Gastrocnemius medialis (tissue), 4 donors: ENCODE measurements at regions of chrX and their contacts with region 1.

Region 1: DNA sequence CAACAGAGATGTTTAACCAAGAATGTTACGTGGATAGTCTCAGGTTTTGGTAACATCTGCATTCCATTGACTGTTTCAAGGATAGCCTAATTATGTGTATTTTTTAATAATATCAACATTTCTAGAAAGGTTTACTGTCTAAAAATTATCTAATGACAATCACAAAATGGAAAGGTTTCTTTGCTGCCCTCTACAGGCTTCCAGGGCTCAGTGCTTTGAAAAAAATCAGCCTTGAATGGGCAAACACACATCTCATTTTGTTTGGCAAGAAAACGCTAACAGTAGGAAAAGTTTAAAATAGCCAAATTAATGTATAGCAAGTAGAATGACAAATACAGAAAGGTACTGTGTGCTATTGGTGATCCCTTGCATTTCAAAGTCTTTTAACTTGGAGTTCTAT is 223.4 kb upstream of the PRPS2 start:
- DNase-seq: no peak
- ATAC-seq: no peak
- H3K4me3 ChIP-seq: no peak overlapping the region
- H3K27ac ChIP-seq: no peak overlapping the region
- H3K4me1 ChIP-seq: no peaks in the 10 kb centered on the region
- H3K27me3 ChIP-seq: no peaks in the 10 kb centered on the region
- CTCF ChIP-seq: peak in 2 of 5 experiments; percentile 27 to 50
- POLR2A ChIP-seq: no peak

Region 2: GRCh38 chrX:11778230-11778629 is 789.6 kb before region 1 on chrX:
- in situ Hi-C with region 1: no loop called
- intact Hi-C with region 1: no loop called
- DNase-seq: no peak
- ATAC-seq: no peak
- H3K4me3 ChIP-seq: no peak overlapping the region
- H3K27ac ChIP-seq: no peak overlapping the region
- H3K4me1 ChIP-seq: no peaks in the 10 kb centered on the region
- H3K27me3 ChIP-seq: no peaks in the 10 kb centered on the region
- CTCF ChIP-seq: no peak
- POLR2A ChIP-seq: no peak

Region 3: DNA sequence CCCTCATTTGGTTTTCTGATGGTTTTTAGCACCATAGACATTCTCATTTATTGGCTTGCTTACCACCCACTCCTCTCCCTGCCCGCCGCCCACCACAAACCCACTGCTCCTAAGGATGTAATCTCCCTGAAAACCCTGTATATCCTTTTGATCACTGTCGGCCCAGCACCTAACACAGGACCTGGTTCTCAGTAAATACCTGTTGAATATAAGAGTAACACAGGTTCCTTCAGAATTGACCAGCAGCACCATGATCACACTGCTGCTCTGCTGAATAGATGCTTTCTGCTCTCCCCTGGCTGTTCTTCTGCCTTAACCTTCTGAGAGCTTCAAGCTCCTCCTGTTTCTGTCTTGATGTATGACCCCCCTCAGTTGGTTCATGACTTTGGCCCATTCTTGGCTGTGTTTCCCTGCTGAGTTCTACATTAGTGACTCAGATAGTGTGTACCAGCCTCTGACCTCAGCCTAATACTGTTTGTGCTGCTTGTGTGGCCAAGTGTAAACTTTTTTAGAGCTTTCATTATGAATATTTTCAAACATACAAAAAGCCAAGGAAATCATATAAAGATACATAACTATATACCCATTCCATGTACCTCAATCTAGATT is 164.3 kb before region 1 on chrX:
- in situ Hi-C with region 1: no loop called
- intact Hi-C with region 1: no loop called
- DNase-seq: no peak
- ATAC-seq: no peak
- H3K4me3 ChIP-seq: no peak overlapping the region
- H3K27ac ChIP-seq: no peak overlapping the region
- H3K4me1 ChIP-seq: no peaks in the 10 kb centered on the region
- H3K27me3 ChIP-seq: no peaks in the 10 kb centered on the region
- CTCF ChIP-seq: no peak
- POLR2A ChIP-seq: no peak

Region 4: DNA sequence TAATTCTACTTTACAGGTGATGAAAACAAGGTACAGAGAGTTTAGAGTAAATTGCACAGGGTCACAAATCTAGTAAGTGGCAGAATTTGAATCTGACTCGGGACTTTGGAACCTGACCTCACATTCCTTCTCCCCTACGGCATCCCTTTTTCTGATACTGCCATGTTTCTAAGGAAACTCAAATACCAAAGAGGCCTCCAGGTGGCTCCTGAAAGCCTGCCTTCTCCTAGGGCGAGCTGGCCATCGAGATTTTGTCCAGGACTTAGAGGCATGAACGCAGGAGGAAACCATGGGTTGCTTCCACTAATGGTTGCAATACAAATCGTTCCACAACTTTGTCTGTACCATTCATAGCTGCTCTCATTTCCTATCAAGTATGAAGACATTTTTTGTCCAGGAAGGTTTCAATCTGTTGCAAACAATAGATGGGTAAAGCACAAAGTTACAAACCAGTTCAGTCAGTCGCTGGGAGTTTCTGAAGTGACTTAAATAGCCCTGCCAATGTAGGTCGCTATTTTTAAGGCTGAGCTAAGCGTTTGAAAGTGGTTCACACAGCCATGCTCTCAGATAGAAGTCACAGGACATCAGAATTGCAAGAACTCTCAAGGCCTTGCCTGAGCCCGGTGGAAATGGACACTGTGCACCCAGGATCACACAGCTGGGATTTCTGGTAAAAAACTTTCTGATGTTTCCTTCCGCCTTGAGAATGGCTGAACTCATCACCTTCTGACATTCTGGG is 73.3 kb before region 1 on chrX:
- in situ Hi-C with region 1: no loop called
- intact Hi-C with region 1: loop called (anchors 5 kb)
- DNase-seq: peak; percentile 2 to 22
- ATAC-seq: peak; percentile 98 to 99
- H3K4me3 ChIP-seq: no peak overlapping the region
- H3K27ac ChIP-seq: peak overlapping the region; percentile 67 to 76 (median 72)
- H3K4me1 ChIP-seq: no peaks in the 10 kb centered on the region
- H3K27me3 ChIP-seq: no peaks in the 10 kb centered on the region
- CTCF ChIP-seq: no peak
- POLR2A ChIP-seq: no peak